Activated CD4-positive, alpha-beta T cell treated with anti-CD3 and anti-CD28 coated beads, Interleukin-2, amount 10 ng/mL, durations not matched to agents 24 days and 14 days (primary cell): ENCODE measurements at regions of chr12 and their contacts with region 1.

Region 1: GRCh38 chr12:54984658-54985376 is at the start of gene TESPA1:
- DNase-seq: peak; percentile 95
- H3K4me3 Mint-ChIP-seq: peak within 1 kb of the TSS; percentile 86
- H3K27ac Mint-ChIP-seq: peak within 1 kb of the TSS; percentile 97
- H3K4me1 Mint-ChIP-seq: peaks cover 61% of the 10 kb centered on the region
- H3K27me3 Mint-ChIP-seq: no peaks in the 10 kb centered on the region
- total RNA-seq, gene TESPA1: 164 and 168 TPM in 2 replicates

Region 2: GRCh38 chr12:54005853-54006686 is 978.7 kb before region 1 on chr12:
- intact Hi-C with region 1: no loop called
- DNase-seq: peak; percentile 95
- H3K4me3 Mint-ChIP-seq: peak overlapping the region; percentile 85
- H3K27ac Mint-ChIP-seq: peak overlapping the region; percentile 20
- H3K4me1 Mint-ChIP-seq: peaks cover 29% of the 10 kb centered on the region
- H3K27me3 Mint-ChIP-seq: peaks cover 93% of the 10 kb centered on the region

Region 3: GRCh38 chr12:54419088-54419892 is 565.5 kb before region 1 on chr12 and contains the start of gene ITGA5:
- intact Hi-C with region 1: loop called (anchors 10 kb)
- DNase-seq: peak; percentile 81
- H3K4me3 Mint-ChIP-seq: peak within 1 kb of the TSS; percentile 88
- H3K27ac Mint-ChIP-seq: peak within 1 kb of the TSS; percentile 90
- H3K4me1 Mint-ChIP-seq: peaks cover 48% of the 10 kb centered on the region
- H3K27me3 Mint-ChIP-seq: peaks cover 21% of the 10 kb centered on the region
- total RNA-seq, gene ITGA5: 43.9 and 48.0 TPM in 2 replicates

Region 4: DNA sequence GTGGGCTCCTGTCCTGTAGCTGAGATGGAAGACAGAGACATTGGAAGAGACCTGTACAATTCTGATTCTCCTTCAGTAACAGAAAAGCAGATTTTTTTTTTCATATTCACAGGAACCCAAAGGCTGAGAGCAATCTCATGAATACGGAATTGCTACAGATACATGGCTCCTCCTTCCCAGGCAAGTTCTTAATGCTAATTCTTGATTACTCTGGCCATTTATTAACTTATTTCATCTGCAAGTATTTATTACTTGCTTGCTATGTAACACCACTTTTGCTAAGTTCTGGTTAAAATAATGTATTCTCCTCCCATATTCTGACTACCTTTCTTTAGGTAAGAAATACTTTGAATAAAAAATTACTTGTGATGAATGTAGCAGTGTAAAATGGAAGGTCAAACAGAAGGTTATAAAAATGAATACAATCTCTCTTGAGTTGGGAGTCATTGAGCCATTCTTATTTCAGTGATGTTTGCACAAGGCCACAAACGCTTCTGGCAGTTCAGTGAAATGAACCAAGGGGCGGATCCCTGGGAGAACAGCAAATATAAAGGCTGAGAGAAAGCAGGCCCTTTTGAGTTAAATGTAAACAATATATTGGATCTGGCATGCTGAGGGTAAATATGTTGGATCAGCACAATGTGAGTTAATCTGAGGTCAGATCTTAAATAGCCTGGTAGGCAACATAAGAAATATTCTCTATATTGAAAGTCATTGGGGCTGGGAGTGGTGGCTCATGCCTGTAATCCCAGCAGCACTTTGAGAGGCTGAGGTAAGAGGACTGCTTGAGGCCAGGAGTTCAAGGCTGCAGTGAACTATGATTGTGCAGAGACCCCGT is 92.9 kb before region 1 on chr12:
- intact Hi-C with region 1: no loop called
- DNase-seq: no peak
- H3K4me3 Mint-ChIP-seq: no peak overlapping the region
- H3K27ac Mint-ChIP-seq: no peak overlapping the region
- H3K4me1 Mint-ChIP-seq: no peaks in the 10 kb centered on the region
- H3K27me3 Mint-ChIP-seq: peaks cover 2% of the 10 kb centered on the region

Region 5: DNA sequence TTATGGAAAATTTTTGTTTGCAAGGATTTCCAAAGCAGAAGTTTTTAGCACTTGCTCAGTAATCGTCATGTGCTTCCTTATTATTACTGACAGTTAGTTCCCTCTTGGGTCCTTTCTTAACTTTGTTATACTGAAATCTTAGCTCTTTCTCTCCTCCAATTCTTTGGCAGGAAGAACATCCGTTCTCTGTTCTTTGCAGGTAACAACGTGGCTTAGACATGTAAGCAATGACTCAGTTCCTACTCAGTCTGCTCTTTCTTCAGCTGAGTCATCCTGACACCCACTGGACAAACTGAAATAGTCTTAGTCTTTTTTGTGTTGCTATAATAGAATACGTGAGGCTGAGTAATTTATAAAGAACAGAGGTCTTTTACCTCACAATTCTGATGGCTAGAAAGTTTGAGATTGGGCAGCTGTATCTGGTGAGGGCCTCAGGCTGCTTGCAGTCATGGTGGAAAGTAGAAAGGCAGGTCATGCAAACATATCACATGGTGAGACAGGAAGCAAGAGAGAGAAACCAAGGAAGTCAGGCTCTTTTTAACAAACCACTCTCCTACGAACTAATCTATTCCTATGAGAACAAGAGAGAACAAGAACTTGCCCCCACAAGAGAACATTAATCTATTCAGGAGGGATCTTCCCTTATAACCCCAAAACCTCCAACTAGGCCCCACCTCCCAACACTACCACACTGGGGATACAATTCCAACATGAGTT is 49.4 kb before region 1 on chr12:
- intact Hi-C with region 1: loop called (anchors 1 kb)
- DNase-seq: peak; percentile 83
- H3K4me3 Mint-ChIP-seq: peak overlapping the region; percentile 56
- H3K27ac Mint-ChIP-seq: peak overlapping the region; percentile 92
- H3K4me1 Mint-ChIP-seq: peaks cover 50% of the 10 kb centered on the region
- H3K27me3 Mint-ChIP-seq: no peaks in the 10 kb centered on the region

Region 6: DNA sequence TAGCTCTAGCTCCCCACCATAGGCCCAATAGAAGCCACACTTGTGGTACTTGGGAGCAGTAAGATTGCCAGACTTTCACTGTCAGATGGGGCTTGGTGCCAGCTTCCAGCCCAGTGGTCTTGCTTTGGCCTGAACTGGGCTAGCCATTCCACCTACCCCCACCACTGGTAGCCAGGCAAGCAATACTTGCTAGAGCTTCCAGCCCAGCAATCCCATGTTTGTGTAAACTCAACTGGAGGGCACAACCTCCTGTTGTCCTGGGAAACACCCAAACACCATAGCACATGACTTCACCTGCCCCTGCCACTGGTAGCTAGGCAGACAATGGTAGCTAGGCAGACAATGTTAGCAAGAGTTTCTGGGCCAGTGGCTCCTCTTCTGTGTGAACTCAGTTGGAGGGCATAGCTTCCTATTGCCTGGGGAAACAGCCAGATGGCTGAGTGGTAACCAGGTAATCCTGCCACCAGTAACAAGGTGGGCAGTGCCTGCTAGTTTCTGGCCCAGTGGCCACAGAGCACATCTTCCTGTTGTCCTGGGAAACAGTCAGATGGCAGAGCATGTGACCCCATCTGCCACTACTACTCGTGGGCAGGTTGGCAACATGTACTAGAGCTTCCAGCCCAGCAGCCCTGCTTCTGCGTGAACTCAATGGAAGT is 435.6 kb after region 1 on chr12:
- intact Hi-C with region 1: no loop called
- DNase-seq: no peak
- H3K4me3 Mint-ChIP-seq: no peak overlapping the region
- H3K27ac Mint-ChIP-seq: no peak overlapping the region
- H3K4me1 Mint-ChIP-seq: no peaks in the 10 kb centered on the region
- H3K27me3 Mint-ChIP-seq: peaks cover 32% of the 10 kb centered on the region